ENCODE measurements at regions of chr12 and their contacts with region 1.

Region 1: GRCh38 chr12:12673296-12673695 is 22.7 kb downstream of the GPR19 start:
- DNase-seq: peak; percentile 64
- ATAC-seq: peak; percentile 92
- H3K4me3 Mint-ChIP-seq: no peak overlapping the region
- H3K27ac Mint-ChIP-seq: peak overlapping the region; percentile 37
- H3K4me1 Mint-ChIP-seq: peaks cover 10% of the 10 kb centered on the region
- H3K27me3 Mint-ChIP-seq: no peaks in the 10 kb centered on the region
- CTCF ChIP-seq: no peak

Region 2: GRCh38 chr12:12654691-12655460 is 18.4 kb before region 1 on chr12:
- CTCF ChIA-PET with region 1: interaction called, 24 read pairs
- POLR2A ChIA-PET with region 1: no interaction called
- intact Hi-C with region 1: no loop called
- DNase-seq: no peak
- ATAC-seq: no peak
- H3K4me3 Mint-ChIP-seq: no peak overlapping the region
- H3K27ac Mint-ChIP-seq: no peak overlapping the region
- H3K4me1 Mint-ChIP-seq: peaks cover 7% of the 10 kb centered on the region
- H3K27me3 Mint-ChIP-seq: no peaks in the 10 kb centered on the region
- CTCF ChIP-seq: no peak

Region 3: GRCh38 chr12:12823292-12823691 is 150.0 kb after region 1 on chr12:
- CTCF ChIA-PET with region 1: no interaction called
- POLR2A ChIA-PET with region 1: no interaction called
- intact Hi-C with region 1: no loop called
- DNase-seq: no peak
- ATAC-seq: no peak
- H3K4me3 Mint-ChIP-seq: no peak overlapping the region
- H3K27ac Mint-ChIP-seq: no peak overlapping the region
- H3K4me1 Mint-ChIP-seq: peaks cover 27% of the 10 kb centered on the region
- H3K27me3 Mint-ChIP-seq: no peaks in the 10 kb centered on the region
- CTCF ChIP-seq: no peak

Measured in activated CD8-positive, alpha-beta T cell treated with anti-CD3 and anti-CD28 coated beads for 36 hours (primary cell).